Thyroid gland (tissue), 4 donors: ENCODE measurements at regions of chr3 and their contacts with region 1.

Region 1: DNA sequence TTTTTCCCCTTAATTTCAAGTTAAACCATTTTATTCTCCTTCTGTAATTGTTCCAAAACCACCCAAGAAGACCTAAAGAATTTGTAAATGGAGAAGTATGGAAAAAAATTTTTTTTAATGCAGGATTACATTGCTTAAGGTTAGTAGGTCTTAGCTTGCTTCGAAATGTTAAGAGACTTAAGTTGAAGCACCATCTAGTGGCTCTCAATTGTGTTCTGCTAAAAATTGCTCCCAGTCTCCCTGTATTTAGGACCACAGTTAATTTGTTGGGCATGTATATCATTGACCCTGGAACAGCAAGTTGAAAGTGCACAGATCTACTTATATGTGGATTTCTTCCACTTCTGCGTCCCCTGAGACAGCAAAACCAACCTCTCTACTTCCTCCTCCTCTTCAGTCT is 32.4 kb downstream of the CD200R1L start:
- DNase-seq: no peak
- H3K4me3 ChIP-seq: no peak overlapping the region
- H3K27ac ChIP-seq: no peak overlapping the region
- H3K4me1 ChIP-seq: no peaks in the 10 kb centered on the region
- H3K27me3 ChIP-seq: no peaks in the 10 kb centered on the region
- CTCF ChIP-seq: peak; percentile 12 to 78 (median 44)
- POLR2A ChIP-seq: no peak

Region 2: GRCh38 chr3:112619295-112619694 is 195.0 kb before region 1 on chr3:
- intact Hi-C with region 1: no loop called
- DNase-seq: no peak
- H3K4me3 ChIP-seq: no peak overlapping the region
- H3K27ac ChIP-seq: no peak overlapping the region
- H3K4me1 ChIP-seq: peaks cover 8 to 13% of the 10 kb centered on the region in 2 donors
- H3K27me3 ChIP-seq: no peaks in the 10 kb centered on the region
- CTCF ChIP-seq: no peak
- POLR2A ChIP-seq: no peak

Region 3: DNA sequence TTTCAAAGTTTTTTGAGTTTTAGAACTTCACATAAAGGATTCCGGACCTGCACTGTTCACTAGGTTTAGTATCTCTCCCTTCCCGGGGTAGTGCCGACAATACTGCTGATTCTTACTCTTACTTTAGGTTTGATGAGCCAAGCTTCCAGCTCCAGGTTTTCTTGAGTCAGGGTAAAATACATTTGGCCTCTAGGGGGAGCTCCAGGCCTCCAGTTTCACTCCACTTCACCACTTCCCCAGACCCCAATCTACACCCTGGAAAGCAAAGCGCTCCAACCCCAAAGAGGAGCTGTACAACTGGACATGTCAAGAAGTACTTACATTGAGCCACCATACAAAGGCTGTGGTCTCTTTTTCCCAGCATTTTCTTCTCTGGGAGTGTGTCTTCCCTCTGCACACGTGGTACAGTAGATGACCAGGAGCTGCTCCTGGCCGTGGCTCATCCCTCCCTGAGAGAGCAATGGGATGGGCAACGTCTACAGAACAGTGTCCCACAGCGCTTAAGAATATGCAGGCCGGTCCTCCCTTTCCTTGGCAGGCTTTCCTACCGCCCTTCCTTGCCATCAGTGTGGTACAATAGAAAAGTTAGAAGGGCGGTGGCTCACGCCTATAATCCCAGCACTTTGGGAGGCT is 79.4 kb before region 1 on chr3:
- intact Hi-C with region 1: loop called (anchors 5 kb)
- DNase-seq: peak; percentile 44 to 51
- H3K4me3 ChIP-seq: no peak overlapping the region
- H3K27ac ChIP-seq: no peak overlapping the region
- H3K4me1 ChIP-seq: peaks cover 8% of the 10 kb centered on the region in 2 donors
- H3K27me3 ChIP-seq: no peaks in the 10 kb centered on the region
- CTCF ChIP-seq: peak; percentile 50 to 72 (median 62)
- POLR2A ChIP-seq: no peak

Region 4: DNA sequence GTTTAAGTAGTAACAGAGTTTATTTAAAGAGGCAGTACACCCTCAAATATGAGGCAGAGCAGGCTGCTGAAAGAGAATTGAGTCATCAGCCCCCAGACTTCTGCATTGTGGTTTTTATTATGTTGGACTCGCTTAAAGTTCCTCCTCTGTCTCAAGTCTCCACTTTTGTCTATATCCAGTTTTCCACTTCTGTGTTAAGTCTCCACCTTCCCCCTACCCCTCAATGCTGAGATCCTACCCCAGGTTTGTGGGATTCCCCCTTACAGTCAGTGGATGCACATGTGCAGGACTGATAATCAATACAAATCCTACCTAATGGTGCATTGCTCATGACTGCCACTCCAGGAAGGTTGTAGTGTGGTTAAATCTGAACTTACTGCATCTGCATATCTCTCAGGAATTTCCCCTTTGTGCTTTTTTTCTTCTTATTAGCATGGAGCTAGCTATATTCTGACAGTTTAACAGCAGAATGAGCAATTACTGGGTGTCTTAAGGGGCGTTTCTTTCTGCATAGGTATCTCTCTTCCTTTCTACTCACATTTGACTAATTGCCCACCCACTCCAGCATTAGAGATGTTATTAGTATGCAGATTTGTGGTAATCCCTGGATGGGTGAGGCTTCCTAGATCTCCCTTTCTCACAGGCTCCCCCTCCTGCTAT is 44.3 kb after region 1 on chr3:
- intact Hi-C with region 1: no loop called
- DNase-seq: no peak
- H3K4me3 ChIP-seq: no peak overlapping the region
- H3K27ac ChIP-seq: no peak overlapping the region
- H3K4me1 ChIP-seq: no peaks in the 10 kb centered on the region
- H3K27me3 ChIP-seq: no peaks in the 10 kb centered on the region
- CTCF ChIP-seq: no peak
- POLR2A ChIP-seq: no peak

Region 5: GRCh38 chr3:112979240-112979832 is 165.1 kb after region 1 on chr3:
- intact Hi-C with region 1: loop called (anchors 10 kb)
- DNase-seq: no peak
- H3K4me3 ChIP-seq: no peak overlapping the region
- H3K27ac ChIP-seq: no peak overlapping the region
- H3K4me1 ChIP-seq: peaks cover 0 to under 1% of the 10 kb centered on the region in 2 donors
- H3K27me3 ChIP-seq: no peaks in the 10 kb centered on the region
- CTCF ChIP-seq: peak in 5 of 6 experiments; percentile 44 to 76 (median 64)
- POLR2A ChIP-seq: no peak

Region 6: DNA sequence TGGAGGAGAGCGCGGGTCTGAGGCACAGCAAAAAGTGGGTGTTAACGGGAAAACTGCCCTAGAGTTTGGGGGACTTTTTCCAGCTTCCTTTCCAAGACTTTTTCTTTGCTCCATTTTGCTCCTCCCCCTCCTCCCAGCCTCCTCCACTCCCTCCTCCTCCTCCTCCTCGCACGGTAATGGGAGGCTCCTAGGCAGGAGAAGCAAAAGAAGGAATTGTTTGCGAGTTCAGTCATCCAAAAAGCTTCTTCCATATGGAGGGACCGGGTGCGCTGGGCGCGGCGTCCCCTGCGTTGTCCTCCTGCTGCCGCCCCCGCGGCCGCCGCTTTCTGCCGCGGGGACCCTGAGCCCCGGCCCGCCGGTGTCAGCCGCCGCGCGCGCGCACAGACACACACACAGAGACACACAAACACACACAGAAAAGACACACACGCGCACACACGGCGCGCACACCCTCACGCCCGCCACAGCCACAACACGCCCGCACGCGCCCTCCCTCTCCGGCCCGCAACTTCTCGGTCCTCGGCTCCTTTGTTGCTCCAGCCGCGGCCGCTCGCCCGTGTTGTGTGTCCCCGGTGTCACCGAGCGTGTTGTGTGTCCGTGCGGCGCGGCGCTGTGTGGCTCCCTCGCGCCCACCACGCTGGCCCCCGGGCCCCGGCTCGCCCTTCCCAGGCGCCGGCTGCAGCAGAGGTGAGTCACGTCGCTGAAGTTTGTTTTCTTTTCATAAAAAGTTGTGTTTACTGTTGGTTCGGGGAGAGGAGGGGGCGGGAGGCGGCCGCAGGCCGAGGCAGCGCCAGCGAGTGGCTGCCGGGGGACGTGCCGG is 397.3 kb after region 1 on chr3 and contains the start of gene BOC:
- intact Hi-C with region 1: no loop called
- DNase-seq: peak; percentile 57 to 62
- H3K4me3 ChIP-seq: peak within 1 kb of the TSS; percentile 73 to 88 (median 75)
- H3K27ac ChIP-seq: peak within 1 kb of the TSS; percentile 90 to 98 (median 97)
- H3K4me1 ChIP-seq: peaks cover 21 to 23% of the 10 kb centered on the region in 2 donors
- H3K27me3 ChIP-seq: no peaks in the 10 kb centered on the region
- CTCF ChIP-seq: peak in 1 of 6 experiments; percentile 29
- POLR2A ChIP-seq: peak; percentile 28 to 81
- total RNA-seq, gene BOC: 40.2 to 68.3 (median 51.2) TPM